Activated B cell treated with CpG ODN at 0.5 μM for 24 hours (primary cell): ENCODE measurements at regions of chr14 and their contacts with region 1.

Region 1: GRCh38 chr14:22536853-22537338 is 52.1 kb downstream of the DAD1 start:
- DNase-seq: no peak
- ATAC-seq: peak; percentile 98
- H3K4me3 Mint-ChIP-seq: peak overlapping the region; percentile 63
- H3K27ac Mint-ChIP-seq: peak overlapping the region; percentile 86
- H3K4me1 Mint-ChIP-seq: peaks cover 84% of the 10 kb centered on the region
- H3K27me3 Mint-ChIP-seq: no peaks in the 10 kb centered on the region
- CTCF ChIP-seq: no peak

Region 2: DNA sequence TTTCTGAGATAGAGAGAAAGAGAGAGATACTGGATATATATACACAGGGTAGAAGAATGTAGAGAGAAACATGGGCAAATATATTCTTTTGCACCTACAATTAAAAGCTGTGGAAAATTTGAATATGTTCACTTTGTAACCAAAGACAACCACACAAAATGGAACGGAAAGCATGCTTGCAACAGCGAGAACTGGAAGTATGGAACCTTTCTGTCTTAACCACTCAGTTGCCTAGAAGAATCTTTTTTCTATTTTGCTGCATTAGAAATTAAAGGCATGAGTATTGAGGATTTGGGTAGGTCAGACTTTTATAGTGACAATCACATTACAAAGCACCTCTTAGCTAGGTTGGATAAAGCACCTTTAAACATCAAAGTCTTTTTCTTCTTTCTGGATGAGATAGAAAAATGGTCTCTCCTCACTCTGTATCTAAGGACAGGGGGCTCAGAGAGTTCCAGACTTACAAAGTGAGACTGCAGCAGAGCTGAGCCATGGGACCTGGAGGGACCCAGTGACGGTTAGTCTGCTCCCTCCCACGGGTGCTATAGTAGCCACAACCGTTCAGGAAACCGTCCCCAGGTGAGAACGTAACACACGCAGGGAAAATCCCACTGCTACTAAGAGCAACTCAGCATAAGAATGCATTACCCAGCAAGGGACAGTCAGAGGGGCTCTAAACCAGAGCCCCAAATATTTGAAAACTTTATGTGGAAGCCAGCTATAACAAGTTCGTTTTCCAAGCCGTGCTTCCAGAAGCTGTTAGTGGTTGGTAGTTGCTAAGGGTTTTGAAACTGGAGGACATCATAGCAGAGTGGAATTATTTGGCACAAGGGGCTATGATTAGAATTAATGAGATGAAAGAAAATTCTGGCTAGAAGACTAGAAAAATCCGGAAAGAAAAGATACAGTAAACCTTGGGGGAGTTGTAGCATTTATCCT is 44.9 kb before region 1 on chr14:
- CTCF ChIA-PET with region 1: no interaction called
- POLR2A ChIA-PET with region 1: interaction called, 9 read pairs
- intact Hi-C with region 1: loop called (anchors 1 kb)
- DNase-seq: no peak
- ATAC-seq: peak; percentile 37
- H3K4me3 Mint-ChIP-seq: peak overlapping the region; percentile 42
- H3K27ac Mint-ChIP-seq: peak overlapping the region; percentile 88
- H3K4me1 Mint-ChIP-seq: peaks cover 98% of the 10 kb centered on the region
- H3K27me3 Mint-ChIP-seq: no peaks in the 10 kb centered on the region
- CTCF ChIP-seq: no peak

Region 3: GRCh38 chr14:22519877-22520685 is 16.8 kb before region 1 on chr14:
- CTCF ChIA-PET with region 1: interaction called, 6 read pairs
- POLR2A ChIA-PET with region 1: interaction called, 59 read pairs
- intact Hi-C with region 1: loop called (anchors 2 kb)
- DNase-seq: no peak
- ATAC-seq: no peak
- H3K4me3 Mint-ChIP-seq: peak overlapping the region; percentile 52
- H3K27ac Mint-ChIP-seq: peak overlapping the region; percentile 88
- H3K4me1 Mint-ChIP-seq: peaks cover 94% of the 10 kb centered on the region
- H3K27me3 Mint-ChIP-seq: no peaks in the 10 kb centered on the region
- CTCF ChIP-seq: no peak

Region 4: GRCh38 chr14:22622255-22622654 is 85.4 kb after region 1 on chr14:
- CTCF ChIA-PET with region 1: no interaction called
- POLR2A ChIA-PET with region 1: no interaction called
- intact Hi-C with region 1: no loop called
- DNase-seq: no peak
- ATAC-seq: no peak
- H3K4me3 Mint-ChIP-seq: no peak overlapping the region
- H3K27ac Mint-ChIP-seq: no peak overlapping the region
- H3K4me1 Mint-ChIP-seq: no peaks in the 10 kb centered on the region
- H3K27me3 Mint-ChIP-seq: no peaks in the 10 kb centered on the region
- CTCF ChIP-seq: no peak